CD8-positive, alpha-beta T cell (primary cell): ENCODE measurements at regions of chr19 and their contacts with region 1.

Region 1: DNA sequence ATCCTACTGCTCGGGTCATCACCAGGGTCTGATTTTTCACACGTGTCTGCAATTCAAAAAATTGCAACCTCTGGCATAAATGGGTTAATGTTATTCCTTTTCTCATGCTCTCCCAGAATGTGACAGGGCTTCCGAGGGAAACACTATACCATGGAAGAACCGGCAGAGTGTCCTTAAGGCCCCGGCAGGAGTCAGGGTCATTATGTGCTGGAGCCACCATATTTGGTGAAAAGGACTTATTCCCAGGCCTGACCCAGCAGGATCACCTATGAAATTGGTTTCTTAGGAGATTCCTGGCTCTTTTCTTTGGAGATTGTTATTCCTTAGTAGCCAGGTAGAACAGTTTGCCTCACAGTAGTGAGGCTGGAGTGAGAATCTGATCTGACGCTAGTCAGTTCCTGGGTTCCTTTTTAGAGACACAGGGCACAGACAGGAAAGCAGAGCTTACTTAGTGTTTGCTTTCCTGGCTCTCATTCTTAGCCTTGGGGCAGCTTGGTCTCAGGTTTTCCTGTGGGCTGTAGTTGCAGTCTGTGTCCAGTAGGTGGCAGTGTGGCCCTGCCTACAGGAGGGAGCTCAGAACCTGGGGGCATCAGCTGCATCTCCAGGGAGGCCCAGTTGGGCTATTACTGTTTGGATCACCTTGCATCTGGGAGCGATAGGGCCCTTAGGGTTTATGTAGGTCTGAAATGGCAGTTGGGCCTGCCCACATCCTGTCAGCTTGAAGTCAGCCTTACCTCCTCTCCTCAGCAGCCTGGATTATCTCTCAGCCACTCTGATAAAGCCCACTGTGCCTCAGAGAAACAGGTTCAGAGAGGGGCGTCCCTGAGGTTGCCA is 12.4 kb downstream of the SNRNP70 start:
- DNase-seq: peak; percentile 54 to 83 (median 74)
- ATAC-seq: peak; percentile 98
- H3K4me3 ChIP-seq: no peak overlapping the region
- H3K4me3 Mint-ChIP-seq: no peak overlapping the region
- H3K27ac ChIP-seq: no peak overlapping the region
- H3K27ac Mint-ChIP-seq: peak overlapping the region; percentile 49
- H3K4me1 ChIP-seq: no peaks in the 10 kb centered on the region
- H3K4me1 Mint-ChIP-seq: peaks cover 7% of the 10 kb centered on the region
- H3K27me3 ChIP-seq: no peaks in the 10 kb centered on the region
- H3K27me3 Mint-ChIP-seq: no peaks in the 10 kb centered on the region
- CTCF ChIP-seq: peak; percentile 96

Region 2: GRCh38 chr19:48501496-48502350 is 595.9 kb before region 1 on chr19:
- CTCF ChIA-PET with region 1: no interaction called
- POLR2A ChIA-PET with region 1: no interaction called
- intact Hi-C with region 1: no loop called
- DNase-seq: peak in 8 of 9 experiments; percentile 47 to 82 (median 52)
- ATAC-seq: peak; percentile 74
- H3K4me3 ChIP-seq: peak overlapping the region; percentile 14 to 21
- H3K4me3 Mint-ChIP-seq: peak overlapping the region; percentile 74
- H3K27ac ChIP-seq: no peak overlapping the region
- H3K27ac Mint-ChIP-seq: no peak overlapping the region
- H3K4me1 ChIP-seq: peaks cover 11% of the 10 kb centered on the region
- H3K4me1 Mint-ChIP-seq: peaks cover 16% of the 10 kb centered on the region
- H3K27me3 ChIP-seq: peaks cover 0 to 11% of the 10 kb centered on the region in 2 experiments
- H3K27me3 Mint-ChIP-seq: no peaks in the 10 kb centered on the region
- CTCF ChIP-seq: no peak

Region 3: DNA sequence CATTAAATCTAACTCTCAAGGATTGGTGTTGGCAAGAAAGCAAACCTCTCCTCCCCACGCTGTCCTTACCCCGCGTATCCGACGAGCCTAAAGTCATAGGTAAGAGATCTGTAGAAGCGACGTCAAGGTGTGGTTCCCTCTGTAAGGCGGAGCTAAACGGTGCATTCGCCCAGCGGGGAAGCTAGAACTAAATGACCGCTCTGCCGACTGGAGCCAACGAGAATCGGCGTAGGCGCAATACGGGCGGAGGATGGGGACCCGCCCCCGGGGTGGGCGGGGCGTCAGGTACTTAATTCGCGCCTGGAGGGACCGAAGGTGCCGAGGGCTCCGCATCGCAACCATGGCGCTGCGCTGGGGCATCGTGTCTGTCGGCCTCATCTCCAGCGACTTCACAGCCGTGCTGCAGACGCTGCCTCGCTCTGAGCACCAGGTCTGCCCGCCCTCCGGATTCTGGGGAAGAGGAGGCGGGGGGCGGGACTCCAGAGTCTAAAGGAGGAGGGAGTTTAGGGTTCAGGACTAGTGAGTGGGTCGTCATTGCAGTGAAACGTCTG is 164.2 kb before region 1 on chr19 and contains the start of gene DHDH:
- CTCF ChIA-PET with region 1: no interaction called
- POLR2A ChIA-PET with region 1: no interaction called
- intact Hi-C with region 1: no loop called
- DNase-seq: peak; percentile 75 to 92 (median 89)
- ATAC-seq: peak; percentile 98
- H3K4me3 ChIP-seq: peak within 1 kb of the TSS; percentile 36 to 48
- H3K4me3 Mint-ChIP-seq: peak within 1 kb of the TSS; percentile 85
- H3K27ac ChIP-seq: peak within 1 kb of the TSS in 1 of 2 experiments; percentile 26
- H3K27ac Mint-ChIP-seq: peak within 1 kb of the TSS; percentile 86
- H3K4me1 ChIP-seq: peaks cover 5% of the 10 kb centered on the region
- H3K4me1 Mint-ChIP-seq: peaks cover 16% of the 10 kb centered on the region
- H3K27me3 ChIP-seq: no peaks in the 10 kb centered on the region
- H3K27me3 Mint-ChIP-seq: no peaks in the 10 kb centered on the region
- CTCF ChIP-seq: no peak
- total RNA-seq, gene DHDH: 0.68 to 1.0 TPM

Region 4: DNA sequence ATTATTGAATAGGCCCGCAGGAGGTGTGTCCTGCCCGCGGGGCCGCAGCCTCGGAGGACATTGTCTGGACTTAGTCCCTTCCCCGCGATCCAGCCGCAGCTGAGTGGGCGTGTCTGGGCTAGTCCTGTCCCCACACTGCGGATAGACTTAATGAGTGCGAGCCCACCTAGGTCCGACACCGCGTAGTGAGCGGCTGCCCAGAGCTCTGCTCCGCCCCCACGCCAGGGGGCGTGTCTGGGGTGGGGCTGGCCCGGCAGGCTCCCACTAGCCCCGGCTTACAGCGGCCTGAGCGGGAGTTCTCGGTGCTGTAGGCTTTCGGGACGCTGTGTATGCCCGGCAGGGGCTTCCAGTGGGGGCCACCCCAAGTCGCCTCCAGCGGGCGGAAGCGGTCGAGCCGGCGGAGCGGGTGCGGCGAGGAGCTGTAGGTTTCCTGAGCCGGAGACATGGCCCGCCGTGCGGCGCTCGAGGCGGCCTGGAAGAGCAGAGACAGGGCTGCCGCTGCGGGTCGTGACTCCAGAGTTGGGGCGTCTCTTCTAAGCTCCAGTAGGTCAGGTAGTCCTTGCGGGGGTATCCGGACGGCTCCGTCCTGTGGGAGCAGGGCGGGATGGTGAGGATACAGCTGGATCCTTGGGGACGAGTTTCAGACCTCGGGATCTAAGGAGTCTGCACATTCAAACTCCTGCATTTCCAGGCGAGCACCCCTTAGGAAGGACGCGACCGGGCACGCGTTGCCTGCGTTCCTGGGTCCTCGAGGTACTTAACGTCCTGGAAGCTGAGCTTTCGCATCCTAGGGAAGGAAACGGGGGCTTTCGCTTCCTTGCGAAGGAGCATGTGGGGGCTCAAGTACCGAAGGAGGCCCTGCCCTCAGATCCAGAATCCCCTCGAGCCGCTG is 41.4 kb before region 1 on chr19:
- CTCF ChIA-PET with region 1: interaction called, 13 read pairs
- POLR2A ChIA-PET with region 1: no interaction called
- intact Hi-C with region 1: no loop called
- DNase-seq: peak in 8 of 9 experiments; percentile 30 to 72 (median 56)
- ATAC-seq: peak; percentile 73
- H3K4me3 ChIP-seq: peak overlapping the region; percentile 57 to 67
- H3K4me3 Mint-ChIP-seq: peak overlapping the region; percentile 85
- H3K27ac ChIP-seq: no peak overlapping the region
- H3K27ac Mint-ChIP-seq: no peak overlapping the region
- H3K4me1 ChIP-seq: peaks cover 17% of the 10 kb centered on the region
- H3K4me1 Mint-ChIP-seq: peaks cover 19% of the 10 kb centered on the region
- H3K27me3 ChIP-seq: peaks cover 0 to 30% of the 10 kb centered on the region in 2 experiments
- H3K27me3 Mint-ChIP-seq: peaks cover 32% of the 10 kb centered on the region
- CTCF ChIP-seq: no peak

Region 5: GRCh38 chr19:49118565-49119410 is 21.1 kb after region 1 on chr19 and contains the start of gene C19orf73:
- CTCF ChIA-PET with region 1: interaction called, 35 read pairs
- POLR2A ChIA-PET with region 1: interaction called, 3 read pairs
- intact Hi-C with region 1: loop called in 1 of 2 experiments (anchors 2 kb)
- DNase-seq: peak; percentile 93 to 98 (median 94)
- ATAC-seq: peak; percentile 83
- H3K4me3 ChIP-seq: peak within 1 kb of the TSS; percentile 68 to 87
- H3K4me3 Mint-ChIP-seq: peak within 1 kb of the TSS; percentile 86
- H3K27ac ChIP-seq: peak within 1 kb of the TSS; percentile 84 to 98
- H3K27ac Mint-ChIP-seq: peak within 1 kb of the TSS; percentile 92
- H3K4me1 ChIP-seq: peaks cover 15% of the 10 kb centered on the region
- H3K4me1 Mint-ChIP-seq: peaks cover 36% of the 10 kb centered on the region
- H3K27me3 ChIP-seq: no peaks in the 10 kb centered on the region
- H3K27me3 Mint-ChIP-seq: no peaks in the 10 kb centered on the region
- CTCF ChIP-seq: peak; percentile 49
- total RNA-seq, gene C19orf73: 0.60 to 0.81 TPM

Region 6: GRCh38 chr19:49133621-49134454 is 36.2 kb after region 1 on chr19:
- CTCF ChIA-PET with region 1: interaction called, 20 read pairs
- POLR2A ChIA-PET with region 1: no interaction called
- intact Hi-C with region 1: no loop called
- DNase-seq: peak in 6 of 9 experiments; percentile 48 to 70 (median 60)
- ATAC-seq: peak; percentile 77
- H3K4me3 ChIP-seq: peak overlapping the region; percentile 25 to 50
- H3K4me3 Mint-ChIP-seq: peak overlapping the region; percentile 74
- H3K27ac ChIP-seq: no peak overlapping the region
- H3K27ac Mint-ChIP-seq: no peak overlapping the region
- H3K4me1 ChIP-seq: peaks cover 15% of the 10 kb centered on the region
- H3K4me1 Mint-ChIP-seq: peaks cover 16% of the 10 kb centered on the region
- H3K27me3 ChIP-seq: no peaks in the 10 kb centered on the region
- H3K27me3 Mint-ChIP-seq: peaks cover 14% of the 10 kb centered on the region
- CTCF ChIP-seq: no peak

Region 7: GRCh38 chr19:49157445-49158224 is 60.0 kb after region 1 on chr19 and contains the start of gene TRPM4:
- CTCF ChIA-PET with region 1: interaction called, 10 read pairs
- POLR2A ChIA-PET with region 1: no interaction called
- intact Hi-C with region 1: no loop called
- DNase-seq: peak in 3 of 9 experiments; percentile 26 to 40 (median 38)
- ATAC-seq: peak; percentile 56
- H3K4me3 ChIP-seq: no peak within 1 kb of the TSS
- H3K4me3 Mint-ChIP-seq: peak within 1 kb of the TSS; percentile 44
- H3K27ac ChIP-seq: no peak within 1 kb of the TSS
- H3K27ac Mint-ChIP-seq: no peak within 1 kb of the TSS
- H3K4me1 ChIP-seq: peaks cover 6% of the 10 kb centered on the region
- H3K4me1 Mint-ChIP-seq: peaks cover 5% of the 10 kb centered on the region
- H3K27me3 ChIP-seq: peaks cover 5 to 16% of the 10 kb centered on the region in 2 experiments
- H3K27me3 Mint-ChIP-seq: peaks cover 61% of the 10 kb centered on the region
- CTCF ChIP-seq: no peak
- total RNA-seq, gene TRPM4: not detected

Region 8: GRCh38 chr19:49210108-49210900 is 112.6 kb after region 1 on chr19:
- CTCF ChIA-PET with region 1: interaction called, 14 read pairs
- POLR2A ChIA-PET with region 1: no interaction called
- intact Hi-C with region 1: no loop called
- DNase-seq: peak in 5 of 9 experiments; percentile 18 to 59 (median 46)
- ATAC-seq: peak; percentile 71
- H3K4me3 ChIP-seq: no peak overlapping the region
- H3K4me3 Mint-ChIP-seq: no peak overlapping the region
- H3K27ac ChIP-seq: no peak overlapping the region
- H3K27ac Mint-ChIP-seq: no peak overlapping the region
- H3K4me1 ChIP-seq: no peaks in the 10 kb centered on the region
- H3K4me1 Mint-ChIP-seq: peaks cover 10% of the 10 kb centered on the region
- H3K27me3 ChIP-seq: no peaks in the 10 kb centered on the region
- H3K27me3 Mint-ChIP-seq: peaks cover 15% of the 10 kb centered on the region
- CTCF ChIP-seq: no peak

Region 9: DNA sequence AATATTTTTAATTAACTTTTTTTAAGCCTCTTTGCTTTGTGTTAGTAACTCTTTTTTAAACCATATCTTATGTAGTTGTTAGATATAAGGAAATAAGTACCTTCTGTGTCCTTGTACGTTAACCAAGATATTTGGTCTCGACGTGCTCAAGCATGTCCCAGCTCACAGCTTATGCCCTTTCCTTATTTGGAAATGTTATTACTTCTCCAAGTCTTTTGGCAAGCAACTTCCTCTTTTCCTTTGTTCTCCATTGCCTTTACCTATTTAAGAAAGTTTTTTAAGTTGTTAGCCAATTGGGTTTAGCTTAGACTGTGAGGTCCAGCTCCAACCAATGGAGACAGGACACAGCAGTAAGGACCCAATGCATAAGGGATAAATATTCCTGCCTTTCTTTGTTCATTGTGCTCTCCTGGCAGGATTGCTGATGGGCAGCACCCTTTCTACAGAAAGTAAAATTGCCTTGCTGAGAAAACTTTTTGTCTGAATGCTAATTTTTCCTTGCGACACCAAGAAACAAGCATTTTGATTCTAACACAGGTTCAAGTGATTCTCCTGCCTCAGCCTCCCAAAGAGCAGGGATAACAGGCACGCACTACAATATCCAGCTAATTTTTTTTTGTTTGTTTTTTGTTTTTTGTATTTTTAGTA is 271.2 kb after region 1 on chr19:
- CTCF ChIA-PET with region 1: no interaction called
- POLR2A ChIA-PET with region 1: no interaction called
- intact Hi-C with region 1: no loop called
- DNase-seq: no peak
- ATAC-seq: no peak
- H3K4me3 ChIP-seq: no peak overlapping the region
- H3K4me3 Mint-ChIP-seq: no peak overlapping the region
- H3K27ac ChIP-seq: no peak overlapping the region
- H3K27ac Mint-ChIP-seq: no peak overlapping the region
- H3K4me1 ChIP-seq: peaks cover 8% of the 10 kb centered on the region
- H3K4me1 Mint-ChIP-seq: no peaks in the 10 kb centered on the region
- H3K27me3 ChIP-seq: peaks cover 4 to 17% of the 10 kb centered on the region in 2 experiments
- H3K27me3 Mint-ChIP-seq: peaks cover 26% of the 10 kb centered on the region
- CTCF ChIP-seq: no peak